ENCODE measurements at regions of chr7 and their contacts with region 1.

Region 1: DNA sequence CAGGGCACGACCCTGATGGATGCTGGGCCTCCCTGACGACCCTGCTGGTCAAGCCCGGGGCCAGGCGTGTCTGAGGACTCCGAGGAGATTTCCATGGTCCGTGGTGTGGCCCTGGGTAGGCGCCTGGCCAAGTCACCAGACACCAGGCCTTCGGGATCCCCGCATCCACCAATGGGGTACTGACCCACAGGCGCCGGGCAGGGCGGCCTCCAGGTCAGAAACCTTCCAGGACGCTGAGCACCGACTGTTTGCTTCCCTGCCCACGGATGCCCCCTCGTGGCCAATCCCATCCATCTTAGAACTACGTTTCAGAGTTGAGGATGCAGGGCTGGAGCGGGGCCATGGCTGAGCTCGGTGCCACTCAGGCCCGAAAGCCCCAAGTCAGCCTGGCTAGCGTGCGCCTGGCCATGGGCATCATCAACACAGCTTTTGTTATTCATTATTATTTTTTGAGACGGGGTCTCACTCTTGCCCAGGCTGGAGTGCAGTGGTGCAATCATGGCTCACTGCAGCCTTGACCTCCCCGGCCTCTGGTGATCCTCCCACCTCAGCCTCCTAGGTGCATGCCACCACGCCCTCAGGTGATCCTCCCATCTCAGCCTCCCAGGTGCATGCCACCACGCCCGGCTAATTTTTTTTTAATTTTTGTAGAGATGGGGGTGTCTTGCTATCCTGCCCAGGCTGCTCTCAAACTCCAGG is 7.1 kb upstream of the AMZ1 start:
- DNase-seq: peak; percentile 88 to 95
- ATAC-seq: peak; percentile 74
- H3K4me3 ChIP-seq: no peak overlapping the region
- H3K27ac ChIP-seq: no peak overlapping the region
- H3K4me1 ChIP-seq: no peaks in the 10 kb centered on the region
- H3K27me3 ChIP-seq: no peaks in the 10 kb centered on the region

Region 2: DNA sequence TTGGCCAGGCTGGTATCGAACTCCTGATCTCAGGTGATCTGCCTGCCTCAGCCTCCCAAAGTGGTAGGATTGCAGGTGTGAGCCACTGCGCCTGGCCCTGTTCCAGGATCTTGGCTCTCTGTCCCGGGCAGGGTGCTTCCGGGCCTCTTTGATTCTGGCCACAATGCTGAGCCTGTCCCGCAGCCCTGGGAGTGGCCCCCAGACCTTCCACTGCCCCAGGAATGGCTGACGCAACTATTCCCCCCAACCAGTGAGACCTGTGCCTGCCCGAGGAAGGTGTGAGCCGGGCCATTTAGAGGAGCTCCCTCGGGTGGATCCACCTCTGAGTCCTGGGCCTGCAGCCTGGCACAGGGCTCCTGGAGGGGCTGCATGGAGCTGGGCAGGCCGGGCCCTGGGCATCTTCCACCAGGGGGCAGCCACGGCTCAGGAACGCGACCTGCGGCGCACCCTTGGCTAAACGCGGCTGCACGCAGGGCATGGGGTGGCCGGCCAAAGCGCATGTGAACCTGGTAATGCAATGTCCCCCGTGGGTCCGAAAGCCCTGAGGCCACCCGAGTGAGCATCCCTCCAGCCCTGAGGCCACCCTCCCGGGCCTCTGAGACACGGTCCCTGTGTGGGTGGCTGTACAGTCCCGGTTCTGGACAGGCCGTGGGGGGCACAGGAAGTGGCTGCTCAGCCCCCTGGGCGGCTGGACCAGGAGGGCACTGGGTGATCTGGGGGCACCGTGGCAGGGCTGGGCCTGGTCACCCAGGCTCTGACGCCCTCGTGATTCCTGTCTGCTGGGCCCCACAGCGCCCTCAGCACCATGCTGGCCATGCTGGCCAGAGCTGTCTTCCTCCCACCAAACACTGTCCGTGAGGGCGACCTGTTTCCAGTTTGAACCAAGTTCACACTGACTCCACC is 229.5 kb before region 1 on chr7:
- intact Hi-C with region 1: loop called (anchors 5 kb)
- DNase-seq: peak; percentile 91 to 96
- ATAC-seq: peak; percentile 94
- H3K4me3 ChIP-seq: peak overlapping the region in 1 of 2 donors; percentile 22
- H3K27ac ChIP-seq: no peak overlapping the region
- H3K4me1 ChIP-seq: no peaks in the 10 kb centered on the region
- H3K27me3 ChIP-seq: no peaks in the 10 kb centered on the region

Region 3: DNA sequence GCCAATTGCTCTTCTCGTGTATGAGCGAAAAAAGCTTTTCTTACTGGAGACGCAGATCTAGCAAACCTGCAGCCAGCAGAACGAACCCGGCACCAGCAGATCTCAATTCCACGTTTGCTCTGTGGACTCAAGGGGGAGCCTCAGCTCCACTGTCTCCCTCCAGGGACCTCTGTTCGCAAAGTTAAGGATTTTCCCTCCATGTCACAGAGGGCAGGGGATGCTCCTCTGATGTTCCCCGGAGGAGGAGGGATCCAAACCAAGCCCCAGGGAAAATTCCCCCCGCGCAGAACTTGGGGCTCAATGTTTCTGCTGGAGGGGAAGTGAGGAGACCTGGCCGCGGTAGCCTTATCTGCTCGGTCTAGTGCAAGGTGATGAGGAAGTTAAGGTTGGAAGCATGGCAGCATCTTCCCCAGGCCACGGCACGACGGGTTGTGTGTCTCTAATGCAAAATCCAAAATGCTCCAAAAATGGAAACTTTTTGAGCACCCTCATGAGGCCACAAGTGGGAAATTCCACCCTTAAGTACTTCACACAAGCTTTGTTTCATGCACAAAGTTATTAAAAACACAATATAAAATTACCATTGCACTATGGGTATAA is 113.2 kb before region 1 on chr7:
- intact Hi-C with region 1: loop called (anchors 1 to 5 kb)
- DNase-seq: peak in 1 of 2 donors; percentile 72
- ATAC-seq: peak; percentile 55
- H3K4me3 ChIP-seq: no peak overlapping the region
- H3K27ac ChIP-seq: no peak overlapping the region
- H3K4me1 ChIP-seq: no peaks in the 10 kb centered on the region
- H3K27me3 ChIP-seq: no peaks in the 10 kb centered on the region